Endothelial cell of umbilical vein (primary cell): ENCODE measurements at regions of chr20 and their contacts with region 1.

Region 1: DNA sequence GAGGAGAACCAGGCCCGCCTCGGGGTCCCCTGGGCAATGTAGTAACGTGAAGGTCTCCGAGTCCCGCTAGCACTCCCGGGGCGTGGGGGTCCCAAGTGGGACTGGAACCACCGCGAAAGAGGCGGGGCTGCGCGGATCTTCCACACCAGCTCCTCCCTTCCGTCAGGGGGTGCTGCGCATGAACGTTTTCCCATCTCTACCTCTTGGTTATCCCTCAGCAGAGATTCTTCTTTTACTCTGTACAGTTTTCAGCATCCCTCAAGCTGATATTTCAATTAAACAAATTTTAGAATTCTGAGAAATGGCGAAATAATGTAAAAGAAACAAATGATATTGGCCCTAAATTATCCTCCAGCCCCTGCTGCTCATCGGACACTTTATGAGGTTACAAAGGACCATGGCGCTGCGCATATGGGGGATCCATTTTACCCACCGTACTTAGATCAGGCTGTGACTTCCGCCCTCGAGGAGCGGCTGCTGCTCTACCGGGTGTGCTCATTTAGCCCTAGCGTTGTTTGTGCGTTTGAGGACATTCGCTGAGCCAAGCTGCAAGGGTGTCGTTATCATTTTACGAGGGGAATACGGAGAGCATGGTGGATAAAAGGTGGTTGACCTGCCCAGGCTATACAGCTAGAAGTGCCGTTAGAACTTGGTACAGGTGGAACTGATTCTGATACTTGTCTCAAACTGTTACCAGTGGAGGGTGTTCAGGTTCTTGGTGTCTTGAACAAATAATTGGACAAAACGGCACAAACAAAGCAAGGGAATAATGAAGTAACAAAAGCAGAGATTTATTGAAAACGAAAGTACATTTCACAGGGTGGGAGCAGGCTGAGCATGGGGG is 75.2 kb upstream of the CHD6 start:
- DNase-seq: peak; percentile 89
- H3K4me3 ChIP-seq: peak overlapping the region; percentile 57 to 78 (median 67)
- H3K27ac ChIP-seq: no peak overlapping the region
- H3K4me1 ChIP-seq: peaks cover 8% of the 10 kb centered on the region
- H3K27me3 ChIP-seq: no peaks in the 10 kb centered on the region
- CTCF ChIP-seq: peak in 1 of 2 donors; percentile 38
- POLR2A ChIP-seq: no peak

Region 2: DNA sequence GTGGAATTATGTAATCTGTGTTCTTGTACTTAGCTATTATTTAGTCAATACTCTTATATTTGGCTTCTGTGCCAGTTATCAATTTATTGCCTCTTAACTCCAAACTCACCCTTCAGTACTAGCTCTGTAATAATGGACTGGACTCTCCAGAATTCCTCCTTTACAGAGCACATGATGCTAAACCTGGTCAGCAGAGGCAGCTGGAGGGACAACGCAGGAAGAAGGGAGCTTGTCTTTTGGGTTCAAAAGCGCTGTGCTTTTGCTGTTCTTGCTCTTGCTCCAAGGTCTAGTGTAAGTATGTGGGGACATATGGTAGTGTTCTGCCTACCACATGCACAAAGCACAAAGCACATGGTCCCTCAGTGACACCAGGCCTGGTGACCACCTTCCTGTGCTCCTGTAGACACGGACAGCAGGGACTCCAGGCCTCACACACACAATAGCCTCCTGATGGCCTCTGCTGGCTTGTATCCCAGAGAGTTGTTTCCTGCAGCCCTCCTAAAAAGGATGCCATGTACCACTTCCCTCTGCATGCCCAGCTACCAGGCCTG is 121.3 kb before region 1 on chr20:
- CTCF ChIA-PET with region 1: no interaction called
- POLR2A ChIA-PET with region 1: no interaction called
- dilution Hi-C with region 1: no loop called
- intact Hi-C with region 1: loop called (anchors 5 kb)
- DNase-seq: no peak
- H3K4me3 ChIP-seq: no peak overlapping the region
- H3K27ac ChIP-seq: no peak overlapping the region
- H3K4me1 ChIP-seq: peaks cover 28% of the 10 kb centered on the region
- H3K27me3 ChIP-seq: no peaks in the 10 kb centered on the region
- CTCF ChIP-seq: peak in 1 of 2 donors; percentile 15
- POLR2A ChIP-seq: no peak

Region 3: DNA sequence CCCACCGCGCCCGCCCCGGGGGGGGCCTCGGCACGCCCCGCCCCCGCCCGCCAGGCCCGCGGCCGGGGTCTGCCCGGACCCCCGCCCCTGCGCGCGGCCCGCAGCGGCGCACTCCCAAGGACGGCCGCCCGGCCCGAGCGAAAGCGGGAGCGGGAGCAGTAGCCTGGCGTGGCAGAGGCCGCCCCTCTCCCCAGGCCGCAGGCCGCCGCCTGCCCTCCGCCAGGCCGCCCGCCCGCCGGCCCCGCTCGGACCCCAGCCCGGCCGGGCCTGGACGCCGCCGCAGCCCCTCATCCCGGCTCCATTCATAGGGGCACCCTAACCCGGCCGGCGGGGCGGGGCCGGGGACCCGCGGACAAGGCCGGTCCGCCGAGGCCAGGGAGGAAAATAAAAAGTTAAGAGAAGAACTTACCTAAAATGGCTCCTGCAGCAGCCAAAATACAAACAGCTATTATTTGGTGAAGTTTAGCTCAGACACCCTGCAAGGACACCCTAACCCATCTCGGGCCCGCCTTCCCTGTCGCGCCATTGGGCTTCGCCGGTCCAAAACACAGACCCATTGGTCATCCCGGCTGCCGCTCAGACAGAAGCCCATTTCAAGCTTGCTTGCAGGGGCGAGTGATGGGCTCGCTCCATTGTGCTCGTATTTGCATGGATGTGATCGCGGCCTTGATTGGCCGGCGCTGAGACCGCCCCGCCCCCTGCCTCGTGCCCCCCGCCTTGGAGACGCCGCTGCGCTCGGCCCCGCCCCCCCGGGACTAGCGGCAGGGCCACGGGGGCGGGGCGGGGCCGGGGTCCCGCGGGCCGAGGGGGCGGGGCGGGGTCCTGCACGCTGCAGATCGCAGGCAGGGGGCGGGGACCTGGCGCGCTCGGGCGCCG is 75.2 kb before region 1 on chr20 and contains the start of gene CHD6:
- CTCF ChIA-PET with region 1: interaction called, 5 read pairs
- POLR2A ChIA-PET with region 1: no interaction called
- dilution Hi-C with region 1: no loop called
- intact Hi-C with region 1: loop called (anchors 1 kb)
- DNase-seq: peak; percentile 99
- H3K4me3 ChIP-seq: peak within 1 kb of the TSS; percentile 86 to 95 (median 90)
- H3K27ac ChIP-seq: peak within 1 kb of the TSS; percentile 67
- H3K4me1 ChIP-seq: peaks cover 8% of the 10 kb centered on the region
- H3K27me3 ChIP-seq: peaks cover 11 to 12% of the 10 kb centered on the region in 2 experiments
- CTCF ChIP-seq: no peak
- POLR2A ChIP-seq: no peak
- total RNA-seq, gene CHD6: 30.9 and 33.7 TPM in 2 replicates

Region 4: GRCh38 chr20:41738604-41739206 is 45.3 kb after region 1 on chr20:
- CTCF ChIA-PET with region 1: interaction called, 10 read pairs
- POLR2A ChIA-PET with region 1: no interaction called
- dilution Hi-C with region 1: no loop called
- intact Hi-C with region 1: no loop called
- DNase-seq: peak; percentile 38
- H3K4me3 ChIP-seq: no peak overlapping the region
- H3K27ac ChIP-seq: no peak overlapping the region
- H3K4me1 ChIP-seq: no peaks in the 10 kb centered on the region
- H3K27me3 ChIP-seq: no peaks in the 10 kb centered on the region
- CTCF ChIP-seq: peak; percentile 73 to 81
- POLR2A ChIP-seq: no peak

Region 5: DNA sequence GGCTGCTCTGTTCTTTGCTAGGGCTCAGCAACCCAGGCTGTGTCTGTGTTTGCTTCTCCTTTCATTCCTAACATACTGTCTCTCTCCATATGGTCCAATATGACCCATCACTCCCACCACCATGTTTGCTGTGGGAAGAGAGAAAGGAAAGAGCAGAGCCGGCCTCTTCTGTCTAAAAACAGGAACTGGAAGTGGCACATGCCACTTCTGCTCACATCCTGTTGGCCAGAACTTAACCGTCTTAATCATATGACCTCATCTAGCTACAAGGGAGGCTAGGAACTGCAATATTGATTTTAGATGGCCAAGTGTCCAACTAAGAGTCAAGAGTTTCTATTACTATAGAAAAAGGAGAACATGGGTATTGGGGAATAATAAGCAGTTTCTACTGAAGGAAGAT is 137.3 kb after region 1 on chr20:
- CTCF ChIA-PET with region 1: no interaction called
- POLR2A ChIA-PET with region 1: no interaction called
- dilution Hi-C with region 1: no loop called
- intact Hi-C with region 1: no loop called
- DNase-seq: no peak
- H3K4me3 ChIP-seq: no peak overlapping the region
- H3K27ac ChIP-seq: no peak overlapping the region
- H3K4me1 ChIP-seq: no peaks in the 10 kb centered on the region
- H3K27me3 ChIP-seq: no peaks in the 10 kb centered on the region
- CTCF ChIP-seq: no peak
- POLR2A ChIP-seq: no peak

Region 6: GRCh38 chr20:42024634-42025033 is 331.3 kb after region 1 on chr20:
- CTCF ChIA-PET with region 1: no interaction called
- POLR2A ChIA-PET with region 1: no interaction called
- dilution Hi-C with region 1: no loop called
- intact Hi-C with region 1: no loop called
- DNase-seq: peak; percentile 2
- H3K4me3 ChIP-seq: no peak overlapping the region
- H3K27ac ChIP-seq: no peak overlapping the region
- H3K4me1 ChIP-seq: no peaks in the 10 kb centered on the region
- H3K27me3 ChIP-seq: no peaks in the 10 kb centered on the region
- CTCF ChIP-seq: no peak
- POLR2A ChIP-seq: no peak

Region 7: GRCh38 chr20:43187476-43188233 is 1494.3 kb after region 1 on chr20:
- CTCF ChIA-PET with region 1: interaction called, 16 read pairs
- POLR2A ChIA-PET with region 1: no interaction called
- dilution Hi-C with region 1: no loop called
- intact Hi-C with region 1: loop called (anchors 2 kb)
- DNase-seq: peak; percentile 58
- H3K4me3 ChIP-seq: no peak overlapping the region
- H3K27ac ChIP-seq: no peak overlapping the region
- H3K4me1 ChIP-seq: no peaks in the 10 kb centered on the region
- H3K27me3 ChIP-seq: peaks cover 11 to 15% of the 10 kb centered on the region in 2 experiments
- CTCF ChIP-seq: peak; percentile 83 to 87
- POLR2A ChIP-seq: no peak

Region 8: DNA sequence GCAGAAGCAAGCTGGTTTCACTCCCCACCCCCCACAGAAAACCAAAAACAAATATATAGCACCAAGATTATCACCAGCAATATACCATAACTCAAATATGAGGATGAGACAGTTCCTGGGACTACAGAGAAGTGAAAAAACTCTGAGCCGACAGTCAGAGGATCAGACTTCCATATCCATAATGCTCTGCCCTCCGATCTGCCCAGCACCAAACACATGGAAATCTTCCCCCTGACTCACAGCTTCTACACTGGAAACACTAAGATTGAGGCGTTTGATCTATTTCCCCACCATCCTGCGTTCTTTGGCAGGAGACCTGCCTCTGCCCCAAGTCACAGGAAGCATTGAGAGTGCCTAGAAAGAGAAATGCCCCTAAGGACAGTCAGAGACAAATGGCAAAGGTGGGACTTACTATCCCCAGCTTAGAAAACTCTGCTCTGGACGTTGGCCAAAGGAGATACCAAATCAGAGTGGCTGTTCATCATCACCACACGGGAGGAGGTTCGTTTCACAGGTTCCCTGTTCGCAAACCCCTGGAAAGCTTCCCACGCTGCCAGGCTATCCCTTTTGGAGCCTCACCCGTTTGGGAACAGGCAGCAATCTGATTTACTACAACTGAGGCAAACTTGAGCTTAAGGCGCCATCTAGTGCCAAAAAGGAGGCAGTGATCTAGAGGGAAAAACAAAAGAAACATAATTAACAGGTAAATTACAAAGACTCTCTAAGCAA is 1715.7 kb after region 1 on chr20:
- CTCF ChIA-PET with region 1: interaction called, 35 read pairs
- POLR2A ChIA-PET with region 1: no interaction called
- dilution Hi-C with region 1: no loop called
- intact Hi-C with region 1: no loop called
- DNase-seq: peak; percentile 38
- H3K4me3 ChIP-seq: no peak overlapping the region
- H3K27ac ChIP-seq: no peak overlapping the region
- H3K4me1 ChIP-seq: no peaks in the 10 kb centered on the region
- H3K27me3 ChIP-seq: no peaks in the 10 kb centered on the region
- CTCF ChIP-seq: peak; percentile 52 to 56
- POLR2A ChIP-seq: no peak